Naive thymus-derived CD4-positive, alpha-beta T cell (primary cell): ENCODE measurements at regions of chr13 and their contacts with region 1.

Region 1: GRCh38 chr13:40485611-40486517 is 180.6 kb downstream of the FOXO1 start:
- DNase-seq: peak; percentile 29 to 93 (median 88)
- ATAC-seq: peak; percentile 97
- H3K4me3 ChIP-seq: peak overlapping the region; percentile 28
- H3K4me3 Mint-ChIP-seq: peak overlapping the region; percentile 67 to 88 (median 78)
- H3K27ac ChIP-seq: peak overlapping the region; percentile 71
- H3K27ac Mint-ChIP-seq: peak overlapping the region; percentile 91 to 100 (median 96)
- H3K4me1 ChIP-seq: peaks cover 45 to 89% of the 10 kb centered on the region in 2 donors
- H3K4me1 Mint-ChIP-seq: peaks cover 61 to 99% (median 90%) of the 10 kb centered on the region in 7 donors
- H3K27me3 ChIP-seq: no peaks in the 10 kb centered on the region
- H3K27me3 Mint-ChIP-seq: no peaks in the 10 kb centered on the region

Region 2: DNA sequence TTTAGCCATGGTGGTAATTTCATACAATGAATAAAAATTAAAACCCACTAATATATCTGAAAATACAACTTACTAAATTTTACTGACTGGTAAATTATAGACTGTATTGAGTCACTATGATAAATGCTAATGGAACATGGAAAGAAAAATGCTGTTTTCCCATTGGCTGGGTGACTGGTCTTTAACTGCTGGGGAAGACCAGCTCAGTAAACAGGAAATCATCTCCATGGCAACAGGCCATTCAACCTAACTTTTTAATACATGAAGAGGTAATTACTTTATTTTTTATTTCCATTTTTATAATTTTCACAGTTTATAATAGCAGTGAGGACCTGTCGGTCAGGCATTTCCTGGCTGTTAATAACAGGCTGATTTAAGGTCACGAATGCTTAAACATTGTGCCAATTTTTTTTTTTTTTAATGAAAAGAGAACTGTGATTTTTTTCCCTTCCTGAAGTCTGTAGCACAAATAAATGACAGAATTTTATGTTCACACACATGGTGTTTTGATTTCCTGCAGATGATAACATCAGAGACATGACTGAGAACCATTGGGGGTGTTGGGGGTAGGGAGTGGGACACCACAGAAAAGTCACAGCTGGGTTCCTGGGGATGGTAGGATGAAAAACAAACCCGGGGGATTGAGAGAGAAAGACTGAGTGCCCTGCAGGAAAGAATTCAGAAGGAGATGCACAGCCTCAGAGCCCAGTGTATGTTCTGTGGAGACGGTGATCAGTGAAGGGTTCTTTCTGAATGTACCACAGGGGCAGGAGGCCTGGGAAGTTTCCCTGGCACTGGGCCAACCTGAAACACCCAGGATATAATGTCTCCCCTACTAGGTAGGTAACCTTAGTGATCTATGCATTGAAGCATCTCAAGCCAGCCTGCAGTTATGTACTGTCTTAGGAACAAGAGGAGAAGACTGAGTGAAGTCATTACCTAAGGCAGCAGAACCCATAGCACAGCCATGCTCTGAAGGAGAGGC is 533.3 kb before region 1 on chr13:
- CTCF ChIA-PET with region 1: no interaction called
- POLR2A ChIA-PET with region 1: no interaction called
- intact Hi-C with region 1: loop called in 1 of 2 experiments (anchors 5 kb)
- DNase-seq: peak in 2 of 9 donors; percentile 11 to 23
- ATAC-seq: peak; percentile 46
- H3K4me3 ChIP-seq: no peak overlapping the region
- H3K4me3 Mint-ChIP-seq: peak overlapping the region in 9 of 10 donors; percentile 13 to 74 (median 53)
- H3K27ac ChIP-seq: no peak overlapping the region
- H3K27ac Mint-ChIP-seq: peak overlapping the region; percentile 34 to 89 (median 82)
- H3K4me1 ChIP-seq: peaks cover 13 to 17% of the 10 kb centered on the region in 2 donors
- H3K4me1 Mint-ChIP-seq: peaks cover 27 to 60% (median 50%) of the 10 kb centered on the region in 7 donors
- H3K27me3 ChIP-seq: no peaks in the 10 kb centered on the region
- H3K27me3 Mint-ChIP-seq: peaks cover 0 to 6% (median 0%) of the 10 kb centered on the region in 5 donors

Region 3: DNA sequence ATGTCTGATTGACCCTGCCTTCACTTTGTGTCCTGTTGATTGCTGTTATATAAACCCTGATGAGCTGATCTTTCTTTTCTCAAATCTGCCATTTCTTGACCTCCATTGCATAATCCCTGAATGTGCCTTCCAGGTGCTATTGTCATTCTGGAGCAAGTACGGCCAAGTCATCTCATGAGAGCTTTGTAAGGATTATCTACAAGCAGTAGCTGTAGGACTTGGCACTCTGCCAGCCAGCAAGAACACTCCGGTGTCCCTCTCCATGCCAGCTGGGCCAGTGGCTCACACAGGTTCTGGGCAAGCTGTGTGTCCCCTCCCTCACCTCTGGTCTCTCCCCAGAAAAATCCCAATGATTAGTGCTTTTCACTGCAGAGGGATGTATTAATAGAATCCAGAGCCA is 167.5 kb before region 1 on chr13:
- CTCF ChIA-PET with region 1: interaction called, 4 read pairs
- POLR2A ChIA-PET with region 1: no interaction called
- intact Hi-C with region 1: loop called in 1 of 2 experiments (anchors 5 kb)
- DNase-seq: no peak
- ATAC-seq: no peak
- H3K4me3 ChIP-seq: no peak overlapping the region
- H3K4me3 Mint-ChIP-seq: peak overlapping the region in 1 of 10 donors; percentile 20
- H3K27ac ChIP-seq: no peak overlapping the region
- H3K27ac Mint-ChIP-seq: peak overlapping the region in 5 of 9 donors; percentile 17 to 85 (median 67)
- H3K4me1 ChIP-seq: peaks cover 5 to 35% of the 10 kb centered on the region in 2 donors
- H3K4me1 Mint-ChIP-seq: peaks cover 39 to 71% (median 68%) of the 10 kb centered on the region in 7 donors
- H3K27me3 ChIP-seq: no peaks in the 10 kb centered on the region
- H3K27me3 Mint-ChIP-seq: no peaks in the 10 kb centered on the region

Region 4: GRCh38 chr13:40508127-40508526 is 22.3 kb after region 1 on chr13:
- CTCF ChIA-PET with region 1: interaction called, 3 read pairs
- POLR2A ChIA-PET with region 1: interaction called, 8 read pairs
- intact Hi-C with region 1: loop called in 1 of 2 experiments (anchors 1 kb)
- DNase-seq: peak in 6 of 9 donors; percentile 36 to 63 (median 50)
- ATAC-seq: peak; percentile 73
- H3K4me3 ChIP-seq: no peak overlapping the region
- H3K4me3 Mint-ChIP-seq: peak overlapping the region in 9 of 10 donors; percentile 37 to 84 (median 65)
- H3K27ac ChIP-seq: peak overlapping the region; percentile 51
- H3K27ac Mint-ChIP-seq: peak overlapping the region; percentile 62 to 95 (median 85)
- H3K4me1 ChIP-seq: peaks cover 0 to 43% of the 10 kb centered on the region in 2 donors
- H3K4me1 Mint-ChIP-seq: peaks cover 27 to 79% (median 71%) of the 10 kb centered on the region in 7 donors
- H3K27me3 ChIP-seq: no peaks in the 10 kb centered on the region
- H3K27me3 Mint-ChIP-seq: no peaks in the 10 kb centered on the region

Region 5: DNA sequence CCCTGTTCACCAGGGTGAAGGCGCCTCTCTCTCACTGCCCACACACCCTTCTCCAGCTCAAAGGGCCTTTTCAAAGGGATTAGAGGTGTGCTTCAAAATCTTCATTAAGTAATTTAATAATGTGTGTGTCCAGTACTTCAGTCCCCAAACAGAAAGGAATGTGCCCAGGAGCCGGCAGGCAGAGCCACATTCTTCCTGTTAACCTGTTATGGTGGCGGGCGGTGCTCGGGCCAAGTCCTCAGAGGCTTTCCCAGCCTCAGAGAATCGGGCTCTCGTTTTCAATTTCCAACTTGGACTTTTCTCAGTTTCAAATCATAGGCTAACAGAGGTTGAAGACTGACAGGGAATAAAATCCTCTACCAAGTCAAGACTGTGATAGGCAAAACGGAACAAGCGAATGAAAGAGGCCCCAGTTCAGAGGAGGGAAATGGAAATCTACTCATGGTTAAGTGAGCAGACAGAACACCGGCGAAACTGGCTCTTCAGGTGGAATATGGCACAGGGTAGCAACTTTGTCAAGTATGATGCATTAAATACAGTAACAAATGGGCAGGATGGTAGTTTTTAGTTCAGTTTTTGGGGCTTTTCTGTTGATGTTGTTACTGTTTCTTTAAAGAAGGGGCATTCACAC is 112.0 kb after region 1 on chr13:
- CTCF ChIA-PET with region 1: no interaction called
- POLR2A ChIA-PET with region 1: no interaction called
- intact Hi-C with region 1: loop called in 1 of 2 experiments (anchors 5 kb)
- DNase-seq: no peak
- ATAC-seq: no peak
- H3K4me3 ChIP-seq: no peak overlapping the region
- H3K4me3 Mint-ChIP-seq: peak overlapping the region; percentile 23 to 77 (median 64)
- H3K27ac ChIP-seq: no peak overlapping the region
- H3K27ac Mint-ChIP-seq: peak overlapping the region; percentile 54 to 90 (median 83)
- H3K4me1 ChIP-seq: peaks cover 43 to 92% of the 10 kb centered on the region in 2 donors
- H3K4me1 Mint-ChIP-seq: peaks cover 66 to 100% (median 93%) of the 10 kb centered on the region in 7 donors
- H3K27me3 ChIP-seq: no peaks in the 10 kb centered on the region
- H3K27me3 Mint-ChIP-seq: no peaks in the 10 kb centered on the region

Region 6: GRCh38 chr13:40706439-40706838 is 220.6 kb after region 1 on chr13:
- CTCF ChIA-PET with region 1: no interaction called
- POLR2A ChIA-PET with region 1: no interaction called
- intact Hi-C with region 1: no loop called
- DNase-seq: peak in 5 of 9 donors; percentile 17 to 39 (median 30)
- ATAC-seq: peak; percentile 49
- H3K4me3 ChIP-seq: no peak overlapping the region
- H3K4me3 Mint-ChIP-seq: peak overlapping the region in 3 of 10 donors; percentile 8 to 43 (median 32)
- H3K27ac ChIP-seq: no peak overlapping the region
- H3K27ac Mint-ChIP-seq: peak overlapping the region in 8 of 9 donors; percentile 11 to 78 (median 51)
- H3K4me1 ChIP-seq: peaks cover 0 to 10% of the 10 kb centered on the region in 2 donors
- H3K4me1 Mint-ChIP-seq: peaks cover 1 to 36% (median 28%) of the 10 kb centered on the region in 7 donors
- H3K27me3 ChIP-seq: no peaks in the 10 kb centered on the region
- H3K27me3 Mint-ChIP-seq: no peaks in the 10 kb centered on the region

Region 7: DNA sequence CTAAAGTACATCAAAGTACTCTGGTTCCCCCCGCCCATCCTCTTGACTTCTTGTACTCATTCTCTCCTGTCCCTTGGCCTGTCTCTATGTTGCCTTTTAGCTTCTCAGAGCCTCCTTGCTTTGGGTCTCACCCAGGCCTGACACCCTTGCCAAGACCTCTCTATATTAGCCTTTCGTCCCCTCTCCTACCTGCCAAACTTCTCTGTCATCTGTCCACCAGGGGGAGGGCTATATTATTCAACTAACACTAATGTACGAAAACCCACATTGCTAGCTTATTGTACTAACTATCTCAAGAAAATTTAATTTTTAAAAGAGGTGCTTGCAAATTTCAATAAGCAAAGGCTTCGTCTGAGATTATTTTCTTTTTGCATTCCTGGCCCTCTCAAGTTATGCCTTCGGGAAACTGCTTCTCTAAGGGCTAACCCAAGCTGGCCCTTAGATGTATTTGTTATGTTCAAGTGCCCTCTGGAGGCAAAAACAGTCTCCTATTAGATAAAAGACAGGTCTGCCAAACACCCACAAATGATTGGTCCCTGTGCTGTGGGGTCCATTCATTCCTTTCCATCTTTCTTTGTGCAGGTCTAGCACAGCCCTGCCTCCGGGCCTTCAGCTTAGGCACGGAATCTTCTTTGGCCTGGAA is 291.4 kb after region 1 on chr13:
- CTCF ChIA-PET with region 1: interaction called, 3 read pairs
- POLR2A ChIA-PET with region 1: no interaction called
- intact Hi-C with region 1: loop called in 1 of 2 experiments (anchors 5 kb)
- DNase-seq: peak in 2 of 9 donors; percentile 15 to 44
- ATAC-seq: peak; percentile 78
- H3K4me3 ChIP-seq: peak overlapping the region; percentile 37
- H3K4me3 Mint-ChIP-seq: peak overlapping the region; percentile 68 to 92 (median 82)
- H3K27ac ChIP-seq: peak overlapping the region; percentile 61
- H3K27ac Mint-ChIP-seq: peak overlapping the region; percentile 94 to 99 (median 97)
- H3K4me1 ChIP-seq: peaks cover 21 to 24% of the 10 kb centered on the region in 2 donors
- H3K4me1 Mint-ChIP-seq: peaks cover 19 to 36% (median 32%) of the 10 kb centered on the region in 7 donors
- H3K27me3 ChIP-seq: no peaks in the 10 kb centered on the region
- H3K27me3 Mint-ChIP-seq: no peaks in the 10 kb centered on the region